ENCODE measurements at regions of chr1 and their contacts with region 1.

Region 1: GRCh38 chr1:201436393-201436792 is 14.9 kb upstream of the TNNI1 start:
- DNase-seq: peak; percentile 56
- ATAC-seq: peak; percentile 97
- H3K4me3 ChIP-seq: no peak overlapping the region
- H3K27ac ChIP-seq: no peak overlapping the region
- H3K4me1 ChIP-seq: peaks cover 13 to 19% of the 10 kb centered on the region in 2 experiments
- H3K27me3 ChIP-seq: no peaks in the 10 kb centered on the region
- CTCF ChIP-seq: peak; percentile 40 to 54 (median 48); a peak in 5 of 6 replicates
- POLR2A ChIP-seq: no peak
- RAD21 ChIP-seq: peak; percentile 54

Region 2: GRCh38 chr1:201447911-201448871 is 11.8 kb after region 1 on chr1:
- CTCF ChIA-PET with region 1: interaction called, 63 read pairs
- POLR2A ChIA-PET with region 1: no interaction called
- RAD21 ChIA-PET with region 1: interaction called in 1 of 2 experiments, 7 read pairs
- intact Hi-C with region 1: no loop called
- DNase-seq: peak; percentile 57
- ATAC-seq: peak; percentile 100
- H3K4me3 ChIP-seq: no peak overlapping the region
- H3K27ac ChIP-seq: no peak overlapping the region
- H3K4me1 ChIP-seq: peaks cover 7 to 19% of the 10 kb centered on the region in 2 experiments; a peak in 3 of 4 replicates
- H3K27me3 ChIP-seq: no peaks in the 10 kb centered on the region
- CTCF ChIP-seq: peak; percentile 89 to 95 (median 94)
- POLR2A ChIP-seq: no peak
- RAD21 ChIP-seq: peak; percentile 91

Region 3: DNA sequence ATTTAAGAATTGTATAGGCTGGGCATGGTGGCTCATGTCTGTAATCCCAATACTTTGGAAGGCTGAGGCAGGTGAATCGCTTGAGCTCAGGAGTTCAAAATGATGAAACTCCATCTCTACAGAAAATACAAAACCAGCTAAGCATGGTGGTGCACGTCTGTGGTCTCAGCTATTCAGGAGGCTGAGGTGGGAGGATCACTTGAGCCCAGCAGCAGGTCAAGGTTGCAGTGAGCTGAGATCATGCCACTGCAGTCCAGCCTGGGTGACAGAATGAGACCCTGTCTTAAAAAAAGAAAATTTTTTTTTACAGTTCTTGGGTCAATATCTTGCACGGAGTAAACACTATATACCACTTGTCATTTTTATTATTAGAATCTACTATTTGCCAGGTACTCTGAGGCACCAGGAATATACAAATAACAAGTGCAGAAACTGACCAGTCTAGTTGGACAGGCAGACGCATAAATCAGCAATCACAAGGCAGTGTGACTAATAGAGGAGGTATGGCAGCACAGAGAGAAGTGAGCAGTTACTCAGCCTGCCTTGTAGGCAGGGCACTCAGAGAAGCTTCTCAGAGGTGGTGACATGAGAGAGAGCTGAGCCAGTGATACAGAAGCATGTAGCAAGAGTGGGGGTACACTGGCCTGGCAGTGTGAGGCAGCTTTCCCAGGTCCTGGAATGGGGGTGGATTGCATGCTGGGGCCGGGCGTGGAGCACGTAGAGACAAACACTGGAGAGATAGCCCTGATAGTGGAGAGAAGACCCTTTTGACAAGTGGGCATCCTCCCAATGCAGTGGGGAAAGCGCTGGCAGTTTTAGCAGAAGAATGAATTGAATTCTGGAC is 24.6 kb after region 1 on chr1:
- CTCF ChIA-PET with region 1: interaction called, 21 read pairs
- POLR2A ChIA-PET with region 1: interaction called, 6 read pairs
- RAD21 ChIA-PET with region 1: interaction called in 1 of 2 experiments, 4 read pairs
- intact Hi-C with region 1: no loop called
- DNase-seq: peak; percentile 86
- ATAC-seq: peak; percentile 85
- H3K4me3 ChIP-seq: peak overlapping the region; percentile 25 to 51
- H3K27ac ChIP-seq: peak overlapping the region; percentile 95
- H3K4me1 ChIP-seq: peaks cover 42 to 75% of the 10 kb centered on the region in 2 experiments
- H3K27me3 ChIP-seq: no peaks in the 10 kb centered on the region
- CTCF ChIP-seq: no peak
- POLR2A ChIP-seq: no peak
- RAD21 ChIP-seq: no peak

Region 4: GRCh38 chr1:201468844-201469511 is 32.6 kb after region 1 on chr1 and contains the start of gene PHLDA3:
- CTCF ChIA-PET with region 1: interaction called, 10 read pairs
- POLR2A ChIA-PET with region 1: no interaction called
- RAD21 ChIA-PET with region 1: interaction called, 3 to 5 read pairs
- intact Hi-C with region 1: no loop called
- DNase-seq: no peak
- ATAC-seq: peak; percentile 86
- H3K4me3 ChIP-seq: peak within 1 kb of the TSS; percentile 62 to 83
- H3K27ac ChIP-seq: peak within 1 kb of the TSS; percentile 97
- H3K4me1 ChIP-seq: peaks cover 23 to 49% of the 10 kb centered on the region in 2 experiments
- H3K27me3 ChIP-seq: no peaks in the 10 kb centered on the region
- CTCF ChIP-seq: no peak
- POLR2A ChIP-seq: no peak
- RAD21 ChIP-seq: no peak
- total RNA-seq, gene PHLDA3: 22.1 TPM

Region 5: DNA sequence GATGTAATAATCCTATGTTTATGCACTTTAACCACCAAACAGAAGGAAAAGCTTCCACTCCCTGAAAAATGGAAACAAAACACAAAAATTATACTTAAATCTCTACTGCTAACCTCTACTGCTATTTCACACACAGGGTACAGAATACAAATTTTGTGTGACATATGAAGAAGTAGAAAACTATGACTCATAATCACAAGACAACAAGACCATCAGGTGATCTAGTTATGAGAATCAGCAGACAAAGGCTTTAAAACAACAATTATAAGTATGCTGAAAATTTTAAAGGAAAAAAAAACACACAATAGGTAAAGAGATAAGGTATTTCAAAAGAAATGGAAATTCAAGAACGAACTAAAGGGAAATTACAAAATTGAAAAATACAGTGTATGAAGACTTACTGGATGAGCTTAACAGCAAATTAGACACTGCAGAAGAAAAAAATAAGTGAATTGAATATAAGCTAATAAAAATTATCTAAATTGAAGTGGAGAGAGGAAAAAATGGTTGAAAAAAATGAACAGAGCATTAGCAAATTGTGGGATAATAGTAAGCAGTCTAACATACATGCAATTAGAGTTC is 88.9 kb after region 1 on chr1:
- CTCF ChIA-PET with region 1: no interaction called
- POLR2A ChIA-PET with region 1: no interaction called
- RAD21 ChIA-PET with region 1: no interaction called
- intact Hi-C with region 1: no loop called
- DNase-seq: no peak
- ATAC-seq: no peak
- H3K4me3 ChIP-seq: no peak overlapping the region
- H3K27ac ChIP-seq: no peak overlapping the region
- H3K4me1 ChIP-seq: no peaks in the 10 kb centered on the region
- H3K27me3 ChIP-seq: no peaks in the 10 kb centered on the region
- CTCF ChIP-seq: no peak
- POLR2A ChIP-seq: no peak
- RAD21 ChIP-seq: no peak

Region 6: DNA sequence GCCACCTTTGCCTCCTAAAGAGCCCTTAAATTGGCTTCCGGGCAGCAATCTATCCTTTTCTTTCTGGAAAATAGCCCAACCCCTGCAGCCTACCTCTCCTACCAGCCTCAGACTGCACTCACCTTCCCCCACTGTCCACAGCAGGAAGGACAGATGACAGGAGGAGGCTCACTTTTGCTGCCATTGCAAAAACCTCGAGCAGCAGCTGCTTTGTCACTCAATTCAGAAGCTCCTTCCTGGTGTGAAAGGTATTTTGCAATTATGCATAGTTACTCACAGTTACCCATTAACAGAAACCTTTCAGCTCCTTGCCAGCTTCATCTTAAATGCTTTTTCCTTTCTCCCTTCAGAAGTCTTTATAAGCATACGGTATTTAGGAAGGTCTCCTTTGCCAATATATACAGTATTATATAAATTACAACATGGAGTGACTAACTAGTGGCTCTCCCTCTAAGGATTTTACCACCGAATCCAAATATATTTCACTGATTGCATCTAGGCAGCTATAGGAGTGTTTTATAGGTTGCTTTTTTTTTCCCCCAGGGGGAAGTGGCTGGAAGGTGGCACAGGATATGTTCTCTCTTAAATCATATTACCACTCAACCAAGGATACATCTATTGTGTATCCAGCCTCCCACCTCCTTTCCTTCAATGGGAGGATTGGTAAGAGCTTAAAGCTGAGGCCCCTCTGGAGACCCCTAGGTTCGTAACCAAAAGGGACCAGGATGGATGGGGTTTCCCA is 250.5 kb after region 1 on chr1:
- CTCF ChIA-PET with region 1: no interaction called
- POLR2A ChIA-PET with region 1: no interaction called
- RAD21 ChIA-PET with region 1: no interaction called
- intact Hi-C with region 1: no loop called
- DNase-seq: no peak
- ATAC-seq: no peak
- H3K4me3 ChIP-seq: no peak overlapping the region
- H3K27ac ChIP-seq: no peak overlapping the region
- H3K4me1 ChIP-seq: no peaks in the 10 kb centered on the region
- H3K27me3 ChIP-seq: no peaks in the 10 kb centered on the region
- CTCF ChIP-seq: no peak
- POLR2A ChIP-seq: no peak
- RAD21 ChIP-seq: no peak